Prostate gland (tissue), 2 donors: ENCODE measurements at regions of chr12 and their contacts with region 1.

Region 1: DNA sequence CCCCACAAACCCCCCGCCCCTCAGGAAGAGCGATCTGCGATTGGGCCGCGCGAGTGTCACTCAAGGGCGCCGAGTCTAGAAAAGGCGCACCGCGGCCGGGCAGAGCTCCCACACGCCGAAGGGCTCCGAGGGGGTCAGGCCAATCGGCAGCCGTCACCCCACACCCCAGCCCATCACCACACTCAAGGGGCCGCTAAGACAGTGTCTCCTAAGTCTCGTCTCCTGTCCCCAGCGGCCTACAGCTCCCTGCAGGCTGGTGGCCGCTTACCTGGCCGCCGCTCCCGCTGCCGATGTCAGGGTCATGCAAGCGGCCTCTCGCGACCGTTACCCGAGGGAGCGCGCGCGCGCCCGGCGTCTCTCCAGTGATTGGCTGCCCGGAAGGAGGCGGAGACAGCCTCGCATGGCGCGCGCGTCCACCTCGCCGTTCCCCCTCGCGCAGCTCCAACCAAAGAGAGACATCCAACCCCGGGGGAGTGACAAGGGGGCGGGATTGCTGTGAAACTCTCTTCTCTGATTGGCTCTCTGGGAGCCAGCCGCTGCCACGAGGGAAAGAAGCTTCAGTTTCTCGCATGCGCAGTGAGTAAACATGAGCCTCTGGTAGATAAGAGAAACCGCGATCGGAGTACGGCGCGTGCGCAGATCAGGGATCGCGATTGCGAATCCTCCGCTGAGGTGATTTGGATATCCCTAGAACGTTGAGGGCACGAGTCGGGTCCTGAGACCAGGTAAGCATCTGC is at the starts of genes MPHOSPH9 and MTRFR:
- DNase-seq: peak; percentile 99
- H3K4me3 ChIP-seq: peak within 1 kb of the TSS; percentile 55 to 73
- H3K27ac ChIP-seq: peak within 1 kb of the TSS; percentile 85 to 89
- H3K4me1 ChIP-seq: peaks cover 16% of the 10 kb centered on the region
- H3K27me3 ChIP-seq: no peaks in the 10 kb centered on the region
- CTCF ChIP-seq: peak in 2 of 4 experiments; percentile 3 to 25
- POLR2A ChIP-seq: peak; percentile 70
- total RNA-seq, gene MPHOSPH9: 24.3 to 25.0 TPM
- total RNA-seq, gene MTRFR: 18.3 to 26.7 TPM

Region 2: GRCh38 chr12:122860346-122861090 is 372.5 kb before region 1 on chr12:
- intact Hi-C with region 1: loop called (anchors 10 kb)
- DNase-seq: peak; percentile 79
- H3K4me3 ChIP-seq: no peak overlapping the region
- H3K27ac ChIP-seq: peak overlapping the region; percentile 28 to 47
- H3K4me1 ChIP-seq: peaks cover 8% of the 10 kb centered on the region
- H3K27me3 ChIP-seq: no peaks in the 10 kb centered on the region
- CTCF ChIP-seq: peak; percentile 95 to 99 (median 96)
- POLR2A ChIP-seq: no peak

Region 3: GRCh38 chr12:122980183-122981046 is 252.6 kb before region 1 on chr12 and contains the start of gene ARL6IP4:
- intact Hi-C with region 1: loop called (anchors 5 kb)
- DNase-seq: peak; percentile 48
- H3K4me3 ChIP-seq: peak within 1 kb of the TSS; percentile 95 to 97
- H3K27ac ChIP-seq: peak within 1 kb of the TSS; percentile 84 to 85
- H3K4me1 ChIP-seq: peaks cover 48% of the 10 kb centered on the region
- H3K27me3 ChIP-seq: no peaks in the 10 kb centered on the region
- CTCF ChIP-seq: peak in 2 of 4 experiments; percentile 14 to 17
- POLR2A ChIP-seq: peak; percentile 66
- total RNA-seq, gene ARL6IP4: 232 to 257 TPM

Region 4: GRCh38 chr12:123043536-123044001 is 189.4 kb before region 1 on chr12:
- intact Hi-C with region 1: loop called (anchors 2 kb)
- DNase-seq: peak; percentile 80
- H3K4me3 ChIP-seq: no peak overlapping the region
- H3K27ac ChIP-seq: no peak overlapping the region
- H3K4me1 ChIP-seq: peaks cover 7% of the 10 kb centered on the region
- H3K27me3 ChIP-seq: no peaks in the 10 kb centered on the region
- CTCF ChIP-seq: peak; percentile 15 to 83 (median 71)
- POLR2A ChIP-seq: no peak

Region 5: DNA sequence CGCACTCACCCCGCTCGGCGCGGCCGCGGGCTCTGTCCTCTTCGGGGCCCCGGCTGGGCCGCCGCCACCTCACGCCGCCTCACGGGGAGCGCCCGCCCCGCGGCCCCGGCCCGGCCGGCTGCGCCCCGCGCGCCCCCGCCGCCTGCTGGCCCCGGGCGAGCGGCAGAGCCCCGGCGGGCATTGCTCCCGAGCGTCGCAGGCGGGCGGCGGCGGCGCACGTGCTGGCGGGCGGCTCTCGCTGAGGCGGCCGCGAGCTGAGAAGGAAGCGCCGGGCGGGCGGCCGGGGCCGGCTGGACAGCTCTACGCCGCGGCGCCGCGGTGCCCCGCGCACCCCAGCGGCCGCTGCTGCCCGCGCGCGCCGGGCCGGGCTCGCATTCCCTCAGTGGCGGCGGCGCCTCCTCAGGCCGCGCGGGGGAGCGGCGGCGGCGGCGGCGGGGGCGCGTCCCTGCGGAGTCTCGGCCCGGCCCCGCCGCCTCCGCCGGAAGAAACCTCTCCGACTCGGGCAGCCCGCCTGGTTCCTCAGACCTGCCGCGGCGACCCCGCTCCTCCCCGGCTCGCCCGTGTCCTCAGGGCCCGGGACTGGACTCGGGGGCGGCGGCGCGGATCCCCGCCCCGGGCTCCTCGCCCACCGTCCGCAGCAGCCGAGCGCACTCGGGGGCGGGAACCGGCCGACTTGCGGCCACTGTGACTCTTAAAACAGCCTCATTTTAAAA is 82.1 kb before region 1 on chr12 and contains the start of gene PITPNM2:
- intact Hi-C with region 1: loop called (anchors 2 kb)
- DNase-seq: peak; percentile 43
- H3K4me3 ChIP-seq: peak within 1 kb of the TSS; percentile 70 to 73
- H3K27ac ChIP-seq: peak within 1 kb of the TSS; percentile 87 to 89
- H3K4me1 ChIP-seq: peaks cover 6% of the 10 kb centered on the region
- H3K27me3 ChIP-seq: no peaks in the 10 kb centered on the region
- CTCF ChIP-seq: peak in 1 of 4 experiments; percentile 48
- POLR2A ChIP-seq: no peak
- total RNA-seq, gene PITPNM2: 2.4 to 15.7 TPM

Region 6: DNA sequence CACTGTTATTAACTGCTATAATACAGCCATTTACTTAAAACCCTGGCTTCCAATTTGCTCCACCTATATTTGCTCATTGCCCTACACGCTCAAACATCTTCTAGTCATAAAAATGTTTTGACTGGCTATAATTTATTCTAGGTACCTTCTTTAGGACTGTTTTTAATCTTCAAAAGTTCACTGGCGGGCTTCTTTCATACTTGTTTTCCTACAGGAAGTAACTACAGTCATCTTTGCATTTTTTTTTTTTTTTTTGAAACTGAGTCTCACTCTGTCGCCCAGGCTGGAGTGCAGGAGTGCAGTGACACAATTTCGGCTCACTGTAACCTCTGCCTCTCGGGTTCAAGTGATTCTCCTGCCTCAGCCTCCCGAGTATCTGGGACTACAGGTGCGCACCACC is 32.6 kb before region 1 on chr12:
- intact Hi-C with region 1: no loop called
- DNase-seq: no peak
- H3K4me3 ChIP-seq: no peak overlapping the region
- H3K27ac ChIP-seq: no peak overlapping the region
- H3K4me1 ChIP-seq: no peaks in the 10 kb centered on the region
- H3K27me3 ChIP-seq: no peaks in the 10 kb centered on the region
- CTCF ChIP-seq: no peak
- POLR2A ChIP-seq: no peak

Region 7: DNA sequence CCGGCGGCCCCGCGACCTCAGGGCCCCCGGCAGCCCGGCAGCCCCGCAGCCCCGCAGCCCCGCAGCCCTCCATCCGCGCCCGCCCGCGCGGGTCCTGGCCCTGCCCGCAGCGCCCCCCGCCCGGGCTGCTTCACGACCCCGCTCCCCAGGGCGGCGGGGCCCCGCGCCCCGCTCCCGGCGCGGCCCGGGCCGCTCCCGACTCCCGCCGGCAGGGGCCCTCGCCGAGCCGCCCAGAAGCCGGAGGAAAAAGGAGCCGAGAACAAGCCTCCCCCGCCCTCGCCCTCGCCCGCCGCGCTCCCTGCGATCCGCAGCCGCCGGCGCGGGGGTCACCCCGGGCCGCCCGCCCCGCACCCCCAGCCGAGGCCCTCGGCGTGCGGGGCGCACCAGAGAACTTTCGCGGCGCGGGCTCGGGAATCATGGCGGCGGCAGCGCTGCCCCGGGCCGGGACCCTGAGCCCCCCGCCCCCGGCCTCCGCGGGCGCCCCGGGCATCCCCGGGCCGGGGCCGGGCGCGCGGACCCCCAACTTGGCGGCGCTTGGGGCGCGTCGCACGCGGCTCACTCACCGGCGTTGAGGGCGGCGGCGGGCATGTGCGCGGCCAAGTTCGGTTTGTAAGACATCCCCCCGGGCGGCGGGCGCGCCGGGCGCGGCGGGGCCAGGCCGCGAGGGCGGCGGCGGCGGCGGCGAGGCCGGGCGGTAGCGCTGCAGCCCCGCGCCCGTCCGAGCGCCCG is 38.2 kb after region 1 on chr12:
- intact Hi-C with region 1: no loop called
- DNase-seq: peak; percentile 61
- H3K4me3 ChIP-seq: peak overlapping the region; percentile 78 to 81
- H3K27ac ChIP-seq: peak overlapping the region; percentile 86 to 88
- H3K4me1 ChIP-seq: peaks cover 11% of the 10 kb centered on the region
- H3K27me3 ChIP-seq: no peaks in the 10 kb centered on the region
- CTCF ChIP-seq: peak; percentile 25 to 63 (median 60)
- POLR2A ChIP-seq: no peak